Esophagus muscularis mucosa (tissue), 4 donors: ENCODE measurements at regions of chr11 and their contacts with region 1.

Region 1: DNA sequence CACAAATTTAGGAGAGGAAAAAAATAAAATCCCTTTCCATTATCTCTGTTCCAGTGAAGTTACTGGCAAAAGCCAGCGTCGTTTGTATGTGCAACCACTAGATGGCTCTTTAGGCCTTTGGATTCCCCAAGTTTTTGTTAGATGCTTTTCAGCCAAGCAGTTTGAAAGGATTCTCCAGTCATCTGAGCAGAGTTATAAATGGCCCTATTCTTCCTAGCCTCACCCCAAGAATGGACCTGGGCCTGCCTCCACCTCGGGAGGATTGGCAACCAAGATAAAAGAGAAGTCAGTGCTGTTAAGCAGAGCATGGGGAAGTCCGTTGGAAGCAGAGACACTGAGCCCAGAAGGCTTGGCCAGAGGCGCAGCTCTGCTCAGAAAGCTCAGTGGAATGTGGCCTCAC is 15.4 kb downstream of the FAM181B start:
- DNase-seq: no peak
- H3K4me3 ChIP-seq: no peak overlapping the region
- H3K27ac ChIP-seq: no peak overlapping the region
- H3K4me1 ChIP-seq: peaks cover 0 to 22% (median 14%) of the 10 kb centered on the region in 4 donors
- H3K27me3 ChIP-seq: no peaks in the 10 kb centered on the region
- CTCF ChIP-seq: peak; percentile 71 to 80 (median 78)
- EP300 ChIP-seq: no peak
- POLR2A ChIP-seq: no peak

Region 2: GRCh38 chr11:82796998-82797964 is 79.0 kb after region 1 on chr11:
- intact Hi-C with region 1: no loop called
- DNase-seq: no peak
- H3K4me3 ChIP-seq: no peak overlapping the region
- H3K27ac ChIP-seq: no peak overlapping the region
- H3K4me1 ChIP-seq: no peaks in the 10 kb centered on the region
- H3K27me3 ChIP-seq: no peaks in the 10 kb centered on the region
- CTCF ChIP-seq: no peak
- EP300 ChIP-seq: no peak
- POLR2A ChIP-seq: no peak

Region 3: DNA sequence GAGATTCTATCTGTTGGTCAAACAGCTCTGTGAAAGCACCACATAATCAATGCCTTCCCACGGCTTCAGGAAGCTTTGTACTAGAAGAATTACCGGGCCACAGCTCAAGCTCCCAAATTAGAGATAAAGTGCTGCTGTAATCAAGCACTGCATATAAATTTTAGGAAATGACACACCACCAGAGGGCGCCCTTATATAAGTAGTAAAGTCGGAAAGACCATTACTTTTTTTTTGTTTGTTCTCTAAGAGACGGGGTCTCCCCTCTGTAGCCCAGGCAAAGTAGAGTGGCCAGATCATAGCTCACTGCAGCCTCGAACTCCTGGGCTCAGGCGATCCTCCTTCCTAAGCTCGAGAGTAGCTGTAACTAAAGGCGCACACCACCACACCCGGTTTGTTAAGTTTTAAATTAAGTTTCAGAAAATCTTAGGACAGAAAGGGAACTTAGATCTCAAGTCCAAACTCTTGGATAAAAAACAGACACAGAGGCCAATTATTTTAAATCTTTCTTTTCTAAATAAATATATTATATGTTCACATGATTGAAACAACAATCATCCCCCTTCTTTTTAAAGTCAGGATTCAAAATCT is 149.3 kb after region 1 on chr11:
- intact Hi-C with region 1: loop called (anchors 2 kb)
- DNase-seq: peak; percentile 97
- H3K4me3 ChIP-seq: peak overlapping the region; percentile 19 to 47 (median 26)
- H3K27ac ChIP-seq: no peak overlapping the region
- H3K4me1 ChIP-seq: peaks cover 23 to 42% (median 34%) of the 10 kb centered on the region in 4 donors
- H3K27me3 ChIP-seq: no peaks in the 10 kb centered on the region
- CTCF ChIP-seq: peak; percentile 66 to 72 (median 71)
- EP300 ChIP-seq: no peak
- POLR2A ChIP-seq: no peak

Region 4: DNA sequence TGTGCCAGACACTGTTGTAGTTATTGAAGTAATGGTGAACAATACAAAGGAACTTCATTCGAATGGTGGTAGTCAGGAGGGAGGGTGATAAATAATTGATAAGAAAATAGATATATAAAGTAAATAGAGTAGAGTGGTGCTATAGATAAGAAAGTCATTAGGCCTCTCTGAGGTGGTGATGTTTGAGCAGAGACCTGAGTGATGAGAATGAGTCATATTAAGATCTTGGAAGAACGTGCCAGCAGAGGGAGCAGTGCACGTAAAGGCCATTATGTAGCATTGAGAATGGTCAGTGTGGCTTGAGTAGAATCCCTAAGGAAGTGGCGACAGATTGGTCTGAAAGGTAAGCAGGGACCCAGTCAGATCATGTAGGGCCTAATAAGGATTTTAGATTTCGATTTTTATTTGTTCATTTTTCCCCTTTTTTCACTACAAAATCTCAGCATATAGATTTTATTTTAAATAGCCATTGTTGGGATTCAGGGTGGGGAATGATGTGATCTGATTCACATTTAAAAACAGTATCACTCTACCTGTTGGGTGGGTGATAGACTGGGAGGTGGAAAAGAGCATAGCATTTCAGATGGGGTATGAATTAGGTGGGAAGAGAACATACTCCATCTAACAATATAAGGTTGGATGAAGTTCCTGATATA is 523.1 kb after region 1 on chr11:
- intact Hi-C with region 1: loop called (anchors 10 kb)
- DNase-seq: no peak
- H3K4me3 ChIP-seq: no peak overlapping the region
- H3K27ac ChIP-seq: no peak overlapping the region
- H3K4me1 ChIP-seq: no peaks in the 10 kb centered on the region
- H3K27me3 ChIP-seq: no peaks in the 10 kb centered on the region
- CTCF ChIP-seq: peak; percentile 30 to 55 (median 38)
- EP300 ChIP-seq: no peak
- POLR2A ChIP-seq: no peak